HepG2 (cell line): ENCODE measurements at regions of chr3 and their contacts with region 1.

Region 1: DNA sequence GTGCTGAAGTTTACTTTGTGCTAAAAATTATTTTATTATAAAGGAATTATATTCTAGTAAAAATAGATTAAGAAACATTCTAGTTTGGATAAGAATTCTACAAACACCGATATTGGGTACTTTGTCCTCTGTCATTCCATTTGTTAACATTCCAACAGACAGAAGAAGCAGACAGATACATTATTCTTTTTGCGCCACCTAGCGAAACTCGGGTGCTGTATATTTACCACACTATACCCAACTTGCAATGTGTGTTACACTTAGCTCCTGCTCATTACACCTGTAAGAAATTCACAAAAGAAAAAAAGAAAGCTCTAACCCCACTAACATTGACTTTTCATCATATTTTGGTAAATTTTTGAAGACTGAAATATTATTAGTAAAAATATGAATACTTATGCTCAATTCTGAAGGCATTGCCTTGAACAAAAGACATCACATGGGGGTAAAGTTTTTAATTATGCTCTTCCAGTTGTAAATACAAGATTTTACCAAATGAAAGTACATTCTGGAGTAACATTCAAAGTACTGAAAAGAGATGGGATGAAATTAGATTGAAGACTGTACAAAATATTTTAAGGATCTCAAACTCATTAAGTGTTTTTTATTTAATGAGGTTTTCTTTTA is 136.5 kb upstream of the MLF1 start:
- DNase-seq: peak; percentile 78
- ATAC-seq: peak; percentile 99
- H3K4me3 ChIP-seq: no peak overlapping the region
- H3K27ac ChIP-seq: no peak overlapping the region
- H3K4me1 ChIP-seq: peaks cover 10% of the 10 kb centered on the region
- H3K27me3 ChIP-seq: no peaks in the 10 kb centered on the region
- CTCF ChIP-seq: peak; percentile 83
- EP300 ChIP-seq: no peak
- POLR2A ChIP-seq: no peak
- RAD21 ChIP-seq: peak; percentile 73

Region 2: DNA sequence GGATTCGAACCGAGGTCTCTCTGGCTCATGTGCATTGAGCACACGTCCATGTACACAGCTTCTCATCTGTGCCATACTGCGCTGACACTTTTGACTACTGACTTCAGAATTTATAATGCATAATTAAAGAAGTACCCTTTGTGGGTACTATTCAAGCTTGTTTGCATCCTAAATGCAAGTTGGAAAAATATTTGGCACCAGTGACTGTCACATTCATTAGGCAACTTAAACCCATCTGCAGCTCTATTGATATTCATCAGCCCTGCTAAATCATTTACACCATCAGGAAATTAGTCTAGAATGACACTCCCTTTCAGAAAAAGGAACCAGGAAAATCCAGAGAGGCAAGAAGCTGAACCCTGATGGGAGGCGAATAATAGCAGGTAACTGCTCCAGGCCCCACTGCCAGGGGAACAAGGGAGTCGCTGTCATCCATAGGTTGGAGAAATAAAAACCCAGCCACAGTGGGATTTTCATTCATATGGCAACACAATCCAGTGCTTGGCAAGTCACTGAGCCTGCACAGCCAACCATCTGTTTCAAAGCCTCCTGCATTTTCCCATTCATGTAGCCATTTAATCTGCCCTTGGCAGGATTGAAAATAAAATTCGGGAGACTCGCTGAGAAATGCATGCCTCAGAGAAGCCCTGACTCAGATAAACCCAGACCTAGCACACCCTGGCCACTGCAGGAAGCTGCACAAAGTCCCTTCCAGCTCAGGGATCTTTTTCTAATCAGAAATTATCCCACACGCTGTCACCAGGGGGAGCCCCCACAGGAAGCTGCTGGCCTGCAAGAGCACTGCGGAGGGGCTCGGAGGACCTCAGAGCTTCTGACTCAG is 828.3 kb before region 1 on chr3:
- CTCF ChIA-PET with region 1: no interaction called
- POLR2A ChIA-PET with region 1: no interaction called
- in situ Hi-C with region 1: loop called (anchors 10 kb)
- intact Hi-C with region 1: loop called (anchors 2 kb)
- DNase-seq: peak; percentile 47
- ATAC-seq: peak; percentile 99
- H3K4me3 ChIP-seq: no peak overlapping the region
- H3K27ac ChIP-seq: no peak overlapping the region
- H3K4me1 ChIP-seq: no peaks in the 10 kb centered on the region
- H3K27me3 ChIP-seq: no peaks in the 10 kb centered on the region
- CTCF ChIP-seq: peak; percentile 81
- EP300 ChIP-seq: no peak
- POLR2A ChIP-seq: no peak
- RAD21 ChIP-seq: no peak

Region 3: DNA sequence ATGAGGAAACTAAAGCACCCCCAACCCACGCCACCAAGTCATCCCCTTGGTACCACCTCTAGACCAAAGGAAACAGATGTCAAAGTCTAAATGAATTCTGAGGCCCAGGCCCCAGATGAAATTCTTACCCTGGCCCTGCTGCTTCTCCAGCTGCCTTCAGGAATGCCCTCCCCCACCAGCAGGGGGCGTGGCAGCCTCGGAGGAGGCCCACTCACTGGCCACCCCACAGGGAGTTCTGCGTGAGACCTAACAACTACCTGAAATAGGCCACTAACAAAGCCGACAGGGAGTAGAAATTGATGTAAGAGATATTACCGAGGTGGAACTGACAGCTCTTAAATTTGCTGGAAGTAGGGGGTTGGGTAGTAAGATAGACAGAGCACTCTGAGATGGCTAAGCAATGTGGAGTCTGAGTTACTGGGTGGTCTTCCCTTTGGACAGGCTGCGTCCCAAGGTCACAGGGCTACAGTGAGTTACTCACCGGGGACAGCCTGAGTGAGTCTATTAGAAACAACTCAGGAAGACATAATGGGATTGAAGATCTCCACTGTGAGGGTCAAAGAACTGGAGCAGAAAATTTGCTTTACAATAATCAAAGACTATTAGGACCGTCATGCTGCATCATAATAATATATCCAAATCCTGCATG is 569.0 kb before region 1 on chr3:
- CTCF ChIA-PET with region 1: interaction called, 13 read pairs
- POLR2A ChIA-PET with region 1: no interaction called
- in situ Hi-C with region 1: loop called (anchors 10 kb)
- intact Hi-C with region 1: no loop called
- DNase-seq: peak; percentile 2
- ATAC-seq: peak; percentile 97
- H3K4me3 ChIP-seq: no peak overlapping the region
- H3K27ac ChIP-seq: no peak overlapping the region
- H3K4me1 ChIP-seq: no peaks in the 10 kb centered on the region
- H3K27me3 ChIP-seq: no peaks in the 10 kb centered on the region; a peak in 1 of 5 replicates
- CTCF ChIP-seq: peak; percentile 85
- EP300 ChIP-seq: no peak
- POLR2A ChIP-seq: no peak
- RAD21 ChIP-seq: peak; percentile 63

Region 4: GRCh38 chr3:158097593-158098308 is 336.8 kb before region 1 on chr3:
- CTCF ChIA-PET with region 1: no interaction called
- POLR2A ChIA-PET with region 1: no interaction called
- in situ Hi-C with region 1: loop called (anchors 10 kb)
- intact Hi-C with region 1: no loop called
- DNase-seq: peak; percentile 76
- ATAC-seq: peak; percentile 96
- H3K4me3 ChIP-seq: peak overlapping the region; percentile 70 to 85 (median 73)
- H3K27ac ChIP-seq: no peak overlapping the region
- H3K4me1 ChIP-seq: peaks cover 9% of the 10 kb centered on the region
- H3K27me3 ChIP-seq: peaks cover 2 to 31% of the 10 kb centered on the region in 2 experiments; a peak in 2 of 5 replicates
- CTCF ChIP-seq: 0 out of 2 replicates have a peak, but pooled peaks have one; percentile 21
- EP300 ChIP-seq: no peak
- POLR2A ChIP-seq: peak; percentile 75 to 86
- RAD21 ChIP-seq: no peak

Region 5: GRCh38 chr3:158313338-158313927 is 121.1 kb before region 1 on chr3:
- CTCF ChIA-PET with region 1: no interaction called
- POLR2A ChIA-PET with region 1: no interaction called
- in situ Hi-C with region 1: no loop called
- intact Hi-C with region 1: loop called (anchors 10 kb)
- DNase-seq: peak; percentile 31
- ATAC-seq: peak; percentile 66
- H3K4me3 ChIP-seq: no peak overlapping the region
- H3K27ac ChIP-seq: no peak overlapping the region
- H3K4me1 ChIP-seq: no peaks in the 10 kb centered on the region
- H3K27me3 ChIP-seq: no peaks in the 10 kb centered on the region
- CTCF ChIP-seq: peak; percentile 60
- EP300 ChIP-seq: no peak
- POLR2A ChIP-seq: no peak
- RAD21 ChIP-seq: no peak

Region 6: DNA sequence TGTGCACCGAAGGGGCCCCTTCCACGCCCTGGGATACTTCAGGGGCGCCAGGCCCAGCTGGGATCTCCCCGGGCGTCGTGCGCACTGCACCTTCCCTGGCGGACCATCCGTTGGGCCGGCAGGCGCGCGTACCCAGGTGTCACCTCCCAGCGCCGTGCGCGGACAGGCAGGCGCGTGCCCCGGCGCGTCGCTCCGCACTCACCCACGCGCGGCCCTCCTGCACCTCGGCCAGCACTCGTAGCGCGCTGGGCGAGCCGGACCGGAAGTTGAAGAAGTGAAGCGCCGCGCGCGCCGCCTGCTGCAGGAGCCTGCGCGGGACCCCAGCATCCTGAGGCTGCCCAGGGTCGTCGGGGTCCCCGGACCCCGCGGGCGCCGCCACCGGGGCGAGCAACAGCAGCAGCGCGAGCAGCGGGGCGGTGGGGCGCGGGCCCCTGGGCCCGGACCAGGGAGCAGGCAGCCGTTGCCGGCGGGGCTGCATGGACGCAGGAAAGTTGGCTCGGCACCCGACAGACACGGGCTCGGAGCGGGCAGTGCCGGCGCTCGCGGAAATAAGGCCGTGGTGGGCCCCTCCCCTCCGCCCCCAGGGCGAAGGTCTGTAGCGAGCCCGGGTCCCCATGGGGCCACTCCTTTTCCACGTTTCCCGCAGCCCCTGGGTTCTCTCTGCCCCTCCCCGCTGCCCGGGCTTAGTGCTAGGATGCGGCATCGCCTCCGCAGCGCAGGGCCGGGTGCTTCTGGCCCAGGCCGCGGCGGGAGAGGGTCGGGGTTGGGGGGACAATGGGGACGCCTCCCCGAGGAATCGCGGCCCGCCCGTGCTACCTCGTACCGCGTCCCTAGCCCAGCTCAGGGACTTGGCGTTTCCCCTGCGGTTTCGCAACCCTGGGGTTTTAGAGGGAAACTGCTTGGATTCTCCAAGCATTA is 297.7 kb after region 1 on chr3 and contains the start of gene RARRES1:
- CTCF ChIA-PET with region 1: no interaction called
- POLR2A ChIA-PET with region 1: no interaction called
- in situ Hi-C with region 1: no loop called
- intact Hi-C with region 1: no loop called
- DNase-seq: no peak
- ATAC-seq: no peak
- H3K4me3 ChIP-seq: no peak within 1 kb of the TSS
- H3K27ac ChIP-seq: no peak within 1 kb of the TSS
- H3K4me1 ChIP-seq: peaks cover 10% of the 10 kb centered on the region; the same call in 1 of the 2 replicates
- H3K27me3 ChIP-seq: no peaks in the 10 kb centered on the region
- CTCF ChIP-seq: no peak
- EP300 ChIP-seq: no peak
- POLR2A ChIP-seq: no peak
- RAD21 ChIP-seq: no peak
- total RNA-seq, gene RARRES1: not detected in 2 replicates